Activated CD4-positive, alpha-beta T cell treated with anti-CD3 and anti-CD28 coated beads for 36 hours (primary cell): ENCODE measurements at regions of chr18 and their contacts with region 1.

Region 1: GRCh38 chr18:61034580-61034979 is 298.6 kb upstream of the CDH20 start:
- DNase-seq: no peak
- ATAC-seq: no peak
- H3K4me3 Mint-ChIP-seq: no peak overlapping the region
- H3K27ac Mint-ChIP-seq: no peak overlapping the region
- H3K4me1 Mint-ChIP-seq: no peaks in the 10 kb centered on the region
- H3K27me3 Mint-ChIP-seq: no peaks in the 10 kb centered on the region

Region 2: DNA sequence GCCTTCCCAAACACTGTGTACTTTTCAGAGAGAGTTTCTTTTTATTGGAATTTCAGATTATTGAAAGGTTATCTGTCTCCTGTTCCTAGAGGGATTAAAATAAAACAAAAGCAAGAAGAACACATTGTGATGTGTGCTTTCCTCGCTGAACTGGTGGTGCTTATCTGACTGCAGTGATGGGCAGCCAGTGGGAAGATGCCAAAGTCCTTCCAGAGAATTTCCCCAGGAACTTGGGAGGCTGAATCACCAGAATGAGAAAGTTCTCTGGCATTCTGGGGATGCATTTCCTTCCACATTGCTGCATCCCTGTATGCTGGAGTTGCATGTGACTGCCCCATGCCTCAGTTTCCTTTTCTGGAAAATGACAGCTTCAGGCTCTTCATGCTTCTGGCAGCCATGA is 1948.8 kb before region 1 on chr18:
- CTCF ChIA-PET with region 1: no interaction called
- POLR2A ChIA-PET with region 1: no interaction called
- intact Hi-C with region 1: no loop called
- DNase-seq: no peak
- ATAC-seq: no peak
- H3K4me3 Mint-ChIP-seq: no peak overlapping the region
- H3K27ac Mint-ChIP-seq: no peak overlapping the region
- H3K4me1 Mint-ChIP-seq: peaks cover 12% of the 10 kb centered on the region
- H3K27me3 Mint-ChIP-seq: peaks cover 13% of the 10 kb centered on the region

Region 3: DNA sequence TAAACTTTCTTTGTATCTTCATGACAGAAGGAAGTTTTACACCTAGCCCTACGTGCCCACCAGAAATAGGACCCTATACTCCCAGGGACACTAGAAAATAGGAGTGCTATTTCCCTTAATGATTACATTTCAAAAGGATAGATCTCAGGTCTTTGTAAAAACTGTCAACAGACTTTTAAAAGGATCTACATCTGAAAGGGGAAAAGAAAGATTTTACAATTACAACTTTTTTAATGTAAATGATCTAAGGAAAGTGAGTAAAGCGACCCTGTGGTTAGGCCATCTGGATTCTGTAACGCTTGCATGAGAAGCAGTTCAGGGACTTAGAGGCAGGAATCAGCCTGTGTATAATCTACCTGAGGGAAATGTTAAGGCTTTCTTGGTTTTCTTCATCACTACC is 230.2 kb before region 1 on chr18:
- CTCF ChIA-PET with region 1: no interaction called
- POLR2A ChIA-PET with region 1: no interaction called
- intact Hi-C with region 1: no loop called
- DNase-seq: no peak
- ATAC-seq: no peak
- H3K4me3 Mint-ChIP-seq: no peak overlapping the region
- H3K27ac Mint-ChIP-seq: no peak overlapping the region
- H3K4me1 Mint-ChIP-seq: no peaks in the 10 kb centered on the region
- H3K27me3 Mint-ChIP-seq: no peaks in the 10 kb centered on the region

Region 4: DNA sequence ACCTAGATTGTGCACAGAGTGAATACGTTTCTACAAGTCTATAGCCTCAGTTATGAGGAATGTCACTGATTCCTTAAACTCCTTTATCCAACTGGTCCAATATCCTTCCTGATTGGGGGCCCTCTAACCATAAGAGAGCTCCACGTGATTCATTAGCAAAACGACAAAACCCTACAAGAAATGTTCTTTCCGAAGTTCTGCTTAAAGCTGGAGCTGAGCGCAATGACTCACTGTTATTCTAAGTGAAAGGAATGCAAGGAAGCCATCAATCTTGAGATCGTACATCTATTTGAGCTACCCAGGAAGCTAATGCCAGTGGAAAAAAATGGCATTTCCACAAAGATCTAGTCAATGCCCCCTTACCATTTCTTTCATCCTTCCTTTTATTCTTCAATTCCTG is 56.2 kb before region 1 on chr18:
- CTCF ChIA-PET with region 1: no interaction called
- POLR2A ChIA-PET with region 1: no interaction called
- intact Hi-C with region 1: loop called in 1 of 2 experiments (anchors 10 kb)
- DNase-seq: no peak
- ATAC-seq: no peak
- H3K4me3 Mint-ChIP-seq: no peak overlapping the region
- H3K27ac Mint-ChIP-seq: no peak overlapping the region
- H3K4me1 Mint-ChIP-seq: no peaks in the 10 kb centered on the region
- H3K27me3 Mint-ChIP-seq: no peaks in the 10 kb centered on the region

Region 5: DNA sequence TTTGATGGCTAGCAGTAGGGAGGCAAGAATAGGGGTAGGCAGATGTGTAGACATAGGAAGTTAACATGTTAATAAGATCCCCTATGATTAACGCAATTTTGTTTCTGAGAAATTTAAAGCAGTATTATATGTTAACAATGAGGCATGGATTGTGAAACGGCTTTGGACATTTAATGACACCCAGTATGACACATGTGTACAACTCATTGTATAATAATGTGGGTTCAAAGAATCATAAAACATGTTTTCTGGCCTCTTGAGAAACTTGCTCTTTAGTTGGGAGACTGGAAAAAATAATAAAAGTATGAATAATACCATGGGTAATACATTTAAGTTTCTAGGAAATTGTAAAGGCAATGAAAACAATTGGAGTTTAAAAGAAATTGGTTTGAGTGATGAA is 33.4 kb before region 1 on chr18:
- CTCF ChIA-PET with region 1: no interaction called
- POLR2A ChIA-PET with region 1: no interaction called
- intact Hi-C with region 1: no loop called
- DNase-seq: no peak
- ATAC-seq: no peak
- H3K4me3 Mint-ChIP-seq: no peak overlapping the region
- H3K27ac Mint-ChIP-seq: no peak overlapping the region
- H3K4me1 Mint-ChIP-seq: no peaks in the 10 kb centered on the region
- H3K27me3 Mint-ChIP-seq: no peaks in the 10 kb centered on the region